ENCODE measurements at regions of chr19 and their contacts with region 1.

Region 1: GRCh38 chr19:44570984-44571684 is 41.7 kb upstream of the CEACAM20 start:
- DNase-seq: no peak
- H3K4me3 ChIP-seq: no peak overlapping the region
- H3K27ac ChIP-seq: no peak overlapping the region
- H3K4me1 ChIP-seq: no peaks in the 10 kb centered on the region
- H3K27me3 ChIP-seq: no peaks in the 10 kb centered on the region
- CTCF ChIP-seq: peak; percentile 32 to 62 (median 56)
- EP300 ChIP-seq: no peak
- POLR2A ChIP-seq: no peak

Region 2: DNA sequence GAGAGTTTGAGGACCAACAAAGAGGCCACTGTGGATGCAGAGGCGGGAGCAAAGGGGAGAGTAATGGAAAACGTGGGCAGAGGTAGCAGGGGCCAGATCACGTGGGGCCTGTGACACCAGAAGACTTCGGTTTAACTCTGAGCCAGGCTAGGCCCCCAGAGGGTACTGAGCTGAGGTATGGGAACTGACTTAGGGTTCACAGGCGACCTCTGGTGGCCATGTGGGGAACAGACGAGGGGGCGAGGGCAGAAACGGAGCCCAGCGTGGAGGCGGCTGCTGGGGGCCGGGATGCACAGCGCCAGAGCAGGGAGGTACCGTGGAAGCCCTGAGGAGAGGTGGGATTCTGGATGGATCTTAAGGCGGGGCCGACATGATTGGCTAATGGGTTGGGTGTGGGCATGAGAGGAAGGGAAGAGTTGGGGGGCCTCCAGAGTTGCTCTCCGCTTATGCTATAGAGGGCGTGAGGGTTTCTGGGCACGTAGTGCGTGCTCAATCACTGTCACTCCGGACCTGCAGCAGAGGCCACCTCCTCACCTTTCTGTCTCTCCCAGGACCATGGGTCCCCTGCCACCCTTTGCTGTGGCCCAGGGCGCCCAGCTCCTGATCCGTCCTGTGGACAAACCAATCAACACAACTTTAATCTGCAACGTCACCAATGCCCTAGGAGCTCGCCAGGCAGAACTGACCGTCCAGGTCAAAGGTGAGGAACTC is 86.2 kb after region 1 on chr19:
- intact Hi-C with region 1: loop called (anchors 2 kb)
- DNase-seq: peak; percentile 69
- H3K4me3 ChIP-seq: no peak overlapping the region
- H3K27ac ChIP-seq: no peak overlapping the region
- H3K4me1 ChIP-seq: peaks cover 0 to 5% (median 0%) of the 10 kb centered on the region in 4 donors
- H3K27me3 ChIP-seq: no peaks in the 10 kb centered on the region
- CTCF ChIP-seq: peak; percentile 71 to 93 (median 83)
- EP300 ChIP-seq: no peak
- POLR2A ChIP-seq: no peak